ENCODE measurements at regions of chr22 and their contacts with region 1.

Region 1: DNA sequence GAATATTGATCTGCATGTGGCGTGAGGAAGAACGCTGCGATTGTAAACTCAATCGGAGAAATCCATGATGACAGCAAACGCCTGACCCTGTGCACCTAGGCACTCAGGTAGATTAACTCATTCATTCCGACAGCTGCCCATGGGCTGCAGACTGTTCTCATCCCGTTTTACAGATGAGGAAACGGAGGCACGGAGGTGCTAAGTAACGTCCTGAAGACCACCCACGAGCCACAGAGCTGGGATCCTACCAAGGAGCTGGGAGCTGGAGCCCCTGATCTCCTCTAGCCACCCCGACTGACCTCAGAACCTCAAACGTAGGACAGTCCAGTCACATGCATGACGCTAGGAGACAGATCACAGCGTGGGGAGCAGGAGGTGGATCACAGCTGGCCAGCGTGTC is 1092.7 kb downstream of the BRD1 start:
- DNase-seq: no peak
- H3K4me3 ChIP-seq: no peak overlapping the region
- H3K27ac ChIP-seq: no peak overlapping the region
- H3K4me1 ChIP-seq: no peaks in the 10 kb centered on the region
- H3K27me3 ChIP-seq: no peaks in the 10 kb centered on the region
- CTCF ChIP-seq: no peak
- POLR2A ChIP-seq: no peak

Region 2: DNA sequence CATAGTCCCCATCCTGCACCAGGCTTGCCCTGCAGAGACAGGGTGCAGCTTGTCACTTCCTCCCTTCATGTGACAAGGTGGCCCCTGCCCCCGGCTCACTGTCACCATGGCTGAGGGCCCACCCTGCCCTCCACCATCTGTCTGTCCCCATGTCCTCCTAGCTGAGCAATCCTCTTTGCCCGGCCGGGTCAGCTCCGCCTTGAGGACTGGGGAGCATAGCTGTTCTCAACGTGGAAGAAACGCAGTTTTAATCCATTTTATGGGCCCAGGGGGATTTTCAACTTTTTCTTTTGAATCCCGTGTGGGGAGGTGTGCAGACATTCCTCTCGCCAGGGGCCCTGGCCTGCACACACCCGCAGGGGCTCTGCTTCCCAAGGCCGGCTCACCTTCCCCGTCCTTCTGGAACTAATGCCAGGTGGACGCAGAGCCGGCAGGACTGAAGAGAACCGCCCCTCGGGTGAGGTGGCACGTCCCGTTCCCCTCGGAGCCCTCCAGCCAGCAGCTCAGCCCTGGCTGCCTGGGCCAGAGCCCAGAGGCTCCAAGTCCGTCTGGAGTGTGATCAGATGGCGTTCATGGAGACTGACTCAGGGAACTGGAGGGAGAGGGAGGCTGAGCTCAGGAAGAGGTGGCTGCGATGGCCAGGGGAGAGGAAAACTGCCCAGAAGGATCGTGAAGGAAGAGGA is 16.0 kb before region 1 on chr22:
- intact Hi-C with region 1: loop called (anchors 1 kb)
- DNase-seq: no peak
- H3K4me3 ChIP-seq: no peak overlapping the region
- H3K27ac ChIP-seq: no peak overlapping the region
- H3K4me1 ChIP-seq: no peaks in the 10 kb centered on the region
- H3K27me3 ChIP-seq: peaks cover 0 to 5% of the 10 kb centered on the region in 2 donors
- CTCF ChIP-seq: no peak
- POLR2A ChIP-seq: no peak